ENCODE measurements at regions of chr12 and their contacts with region 1.

Region 1: GRCh38 chr12:26028953-26029735 is 70.7 kb downstream of the RASSF8 start:
- DNase-seq: peak in 1 of 2 experiments; percentile 69
- H3K4me3 ChIP-seq: no peak overlapping the region
- H3K4me3 Mint-ChIP-seq: no peak overlapping the region
- H3K27ac Mint-ChIP-seq: no peak overlapping the region
- H3K4me1 ChIP-seq: peaks cover 50% of the 10 kb centered on the region
- H3K4me1 Mint-ChIP-seq: peaks cover 54% of the 10 kb centered on the region
- H3K27me3 ChIP-seq: no peaks in the 10 kb centered on the region
- H3K27me3 Mint-ChIP-seq: no peaks in the 10 kb centered on the region
- CTCF ChIP-seq: peak; percentile 84 to 95

Region 2: GRCh38 chr12:25583545-25583944 is 445.6 kb before region 1 on chr12:
- CTCF ChIA-PET with region 1: no interaction called
- POLR2A ChIA-PET with region 1: no interaction called
- intact Hi-C with region 1: loop called (anchors 1 kb)
- DNase-seq: peak; percentile 61 to 76
- H3K4me3 ChIP-seq: no peak overlapping the region
- H3K4me3 Mint-ChIP-seq: no peak overlapping the region
- H3K27ac Mint-ChIP-seq: no peak overlapping the region
- H3K4me1 ChIP-seq: 0 out of 2 replicates have a peak, but pooled peaks cover 6% of the 10 kb centered on the region
- H3K4me1 Mint-ChIP-seq: peaks cover 8% of the 10 kb centered on the region
- H3K27me3 ChIP-seq: no peaks in the 10 kb centered on the region
- H3K27me3 Mint-ChIP-seq: no peaks in the 10 kb centered on the region
- CTCF ChIP-seq: peak; percentile 18 to 45

Region 3: DNA sequence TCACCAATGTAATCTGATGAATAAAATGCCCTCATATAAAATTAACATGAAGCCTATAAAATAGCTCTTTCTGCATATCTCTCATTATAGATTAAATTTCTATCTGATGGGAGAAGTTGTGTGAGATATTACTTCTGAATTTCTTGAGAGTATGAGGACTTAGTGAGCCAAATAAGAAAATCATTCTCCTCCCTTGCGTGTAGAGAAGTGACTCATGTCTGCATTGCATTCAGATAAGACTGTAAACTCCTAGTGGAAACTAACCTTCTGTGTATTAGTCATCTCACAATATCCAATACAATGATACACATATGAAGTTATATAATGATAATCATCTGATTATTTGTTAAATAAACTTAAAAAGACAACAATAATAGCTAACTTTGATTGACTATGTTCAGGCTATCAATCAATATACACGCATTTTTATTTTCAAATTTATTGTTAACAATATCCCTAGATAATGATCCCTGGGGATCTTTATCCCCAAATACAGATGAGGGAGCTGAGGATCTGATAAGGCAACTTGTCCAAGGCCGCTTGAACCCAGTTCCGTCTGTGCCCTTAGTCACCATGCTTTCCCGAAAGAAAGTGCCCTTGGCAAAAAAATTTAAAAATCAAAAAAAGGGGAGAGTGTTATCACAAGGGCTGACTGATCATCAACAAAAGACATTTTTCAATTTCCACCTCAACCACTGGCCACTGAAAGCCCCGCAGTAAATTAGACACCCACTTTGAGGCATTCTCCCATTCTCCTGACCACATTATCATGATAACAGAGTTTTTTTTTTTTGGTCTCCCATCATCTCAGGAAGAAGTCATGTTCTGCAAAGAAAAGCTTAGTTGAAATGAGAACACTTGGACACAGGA is 259.8 kb before region 1 on chr12:
- CTCF ChIA-PET with region 1: no interaction called
- POLR2A ChIA-PET with region 1: no interaction called
- intact Hi-C with region 1: loop called (anchors 10 kb)
- DNase-seq: no peak
- H3K4me3 ChIP-seq: no peak overlapping the region
- H3K4me3 Mint-ChIP-seq: no peak overlapping the region
- H3K27ac Mint-ChIP-seq: no peak overlapping the region
- H3K4me1 ChIP-seq: no peaks in the 10 kb centered on the region
- H3K4me1 Mint-ChIP-seq: peaks cover 7% of the 10 kb centered on the region
- H3K27me3 ChIP-seq: no peaks in the 10 kb centered on the region
- H3K27me3 Mint-ChIP-seq: no peaks in the 10 kb centered on the region
- CTCF ChIP-seq: no peak

Region 4: DNA sequence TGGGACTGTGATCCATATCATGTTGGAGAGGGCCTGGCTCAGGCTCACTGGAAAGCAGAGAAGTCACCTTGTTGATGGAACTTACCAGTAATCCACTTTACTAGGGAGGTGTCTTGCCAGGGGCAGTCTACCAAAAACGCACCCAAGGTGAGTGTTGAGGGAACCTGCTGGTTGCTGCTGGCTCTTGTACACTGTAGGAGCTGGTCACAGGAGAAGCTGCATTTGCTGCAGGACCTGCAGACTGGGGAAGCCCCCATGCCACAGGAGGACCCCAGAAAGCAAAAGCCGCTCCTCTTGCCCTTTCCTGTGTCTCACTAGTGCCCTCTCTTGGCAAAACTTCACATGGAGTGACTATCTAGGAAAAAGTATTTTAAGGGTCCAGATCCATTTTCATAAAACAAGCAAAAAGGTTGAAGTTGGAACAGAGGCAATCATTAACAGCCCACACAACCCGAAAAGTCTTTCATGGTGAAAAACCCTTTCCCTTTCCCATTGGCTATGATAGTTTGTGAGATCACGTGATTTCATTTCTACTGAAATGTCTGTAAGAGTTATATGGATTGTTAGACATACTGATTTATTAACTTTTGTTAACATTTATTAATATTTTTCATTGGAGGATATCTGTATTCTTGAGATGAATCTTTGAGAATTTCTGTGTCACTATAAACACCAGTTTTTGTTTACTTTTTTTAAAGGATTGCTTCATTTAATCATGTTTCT is 11.5 kb before region 1 on chr12:
- CTCF ChIA-PET with region 1: interaction called, 3 read pairs
- POLR2A ChIA-PET with region 1: no interaction called
- intact Hi-C with region 1: loop called (anchors 1 kb)
- DNase-seq: peak; percentile 52 to 74
- H3K4me3 ChIP-seq: no peak overlapping the region
- H3K4me3 Mint-ChIP-seq: no peak overlapping the region
- H3K27ac Mint-ChIP-seq: no peak overlapping the region
- H3K4me1 ChIP-seq: no peaks in the 10 kb centered on the region
- H3K4me1 Mint-ChIP-seq: peaks cover 16% of the 10 kb centered on the region
- H3K27me3 ChIP-seq: no peaks in the 10 kb centered on the region
- H3K27me3 Mint-ChIP-seq: no peaks in the 10 kb centered on the region
- CTCF ChIP-seq: peak; percentile 75 to 90

Region 5: GRCh38 chr12:26153421-26154154 is 124.4 kb after region 1 on chr12:
- CTCF ChIA-PET with region 1: no interaction called
- POLR2A ChIA-PET with region 1: no interaction called
- intact Hi-C with region 1: no loop called
- DNase-seq: no peak
- H3K4me3 ChIP-seq: no peak overlapping the region
- H3K4me3 Mint-ChIP-seq: no peak overlapping the region
- H3K27ac Mint-ChIP-seq: no peak overlapping the region
- H3K4me1 ChIP-seq: peaks cover 22% of the 10 kb centered on the region
- H3K4me1 Mint-ChIP-seq: peaks cover 12% of the 10 kb centered on the region
- H3K27me3 ChIP-seq: no peaks in the 10 kb centered on the region
- H3K27me3 Mint-ChIP-seq: no peaks in the 10 kb centered on the region
- CTCF ChIP-seq: no peak

Measured in Caco-2 (cell line).